CD8-positive, alpha-beta T cell (primary cell): ENCODE measurements at regions of chrX and their contacts with region 1.

Region 1: GRCh38 chrX:154490414-154491083 is at the start of gene SLC10A3:
- DNase-seq: peak; percentile 77 to 94 (median 85)
- ATAC-seq: peak; percentile 79
- H3K4me3 ChIP-seq: peak within 1 kb of the TSS; percentile 60 to 71
- H3K4me3 Mint-ChIP-seq: peak within 1 kb of the TSS; percentile 85
- H3K27ac ChIP-seq: peak within 1 kb of the TSS; percentile 84 to 94
- H3K27ac Mint-ChIP-seq: peak within 1 kb of the TSS; percentile 94
- H3K4me1 ChIP-seq: peaks cover 19% of the 10 kb centered on the region
- H3K4me1 Mint-ChIP-seq: peaks cover 24% of the 10 kb centered on the region
- H3K27me3 ChIP-seq: no peaks in the 10 kb centered on the region
- H3K27me3 Mint-ChIP-seq: no peaks in the 10 kb centered on the region
- CTCF ChIP-seq: no peak
- total RNA-seq, gene SLC10A3: 22.3 to 23.0 TPM

Region 2: GRCh38 chrX:153714256-153714655 is 776.3 kb before region 1 on chrX:
- CTCF ChIA-PET with region 1: no interaction called
- POLR2A ChIA-PET with region 1: no interaction called
- intact Hi-C with region 1: no loop called
- DNase-seq: no peak
- ATAC-seq: no peak
- H3K4me3 ChIP-seq: no peak overlapping the region
- H3K4me3 Mint-ChIP-seq: no peak overlapping the region
- H3K27ac ChIP-seq: no peak overlapping the region
- H3K27ac Mint-ChIP-seq: no peak overlapping the region
- H3K4me1 ChIP-seq: no peaks in the 10 kb centered on the region
- H3K4me1 Mint-ChIP-seq: peaks cover 11% of the 10 kb centered on the region
- H3K27me3 ChIP-seq: no peaks in the 10 kb centered on the region
- H3K27me3 Mint-ChIP-seq: no peaks in the 10 kb centered on the region
- CTCF ChIP-seq: no peak

Region 3: GRCh38 chrX:154019633-154020528 is 470.7 kb before region 1 on chrX and contains the start of gene IRAK1:
- CTCF ChIA-PET with region 1: no interaction called
- POLR2A ChIA-PET with region 1: no interaction called
- intact Hi-C with region 1: no loop called
- DNase-seq: peak in 8 of 9 experiments; percentile 29 to 78 (median 54)
- ATAC-seq: peak; percentile 68
- H3K4me3 ChIP-seq: peak within 1 kb of the TSS; percentile 54
- H3K4me3 Mint-ChIP-seq: peak within 1 kb of the TSS; percentile 83
- H3K27ac ChIP-seq: peak within 1 kb of the TSS; percentile 56 to 76
- H3K27ac Mint-ChIP-seq: peak within 1 kb of the TSS; percentile 91
- H3K4me1 ChIP-seq: peaks cover 22% of the 10 kb centered on the region
- H3K4me1 Mint-ChIP-seq: peaks cover 24% of the 10 kb centered on the region
- H3K27me3 ChIP-seq: no peaks in the 10 kb centered on the region
- H3K27me3 Mint-ChIP-seq: no peaks in the 10 kb centered on the region
- CTCF ChIP-seq: no peak
- total RNA-seq, gene IRAK1: 84.8 to 92.5 TPM

Region 4: DNA sequence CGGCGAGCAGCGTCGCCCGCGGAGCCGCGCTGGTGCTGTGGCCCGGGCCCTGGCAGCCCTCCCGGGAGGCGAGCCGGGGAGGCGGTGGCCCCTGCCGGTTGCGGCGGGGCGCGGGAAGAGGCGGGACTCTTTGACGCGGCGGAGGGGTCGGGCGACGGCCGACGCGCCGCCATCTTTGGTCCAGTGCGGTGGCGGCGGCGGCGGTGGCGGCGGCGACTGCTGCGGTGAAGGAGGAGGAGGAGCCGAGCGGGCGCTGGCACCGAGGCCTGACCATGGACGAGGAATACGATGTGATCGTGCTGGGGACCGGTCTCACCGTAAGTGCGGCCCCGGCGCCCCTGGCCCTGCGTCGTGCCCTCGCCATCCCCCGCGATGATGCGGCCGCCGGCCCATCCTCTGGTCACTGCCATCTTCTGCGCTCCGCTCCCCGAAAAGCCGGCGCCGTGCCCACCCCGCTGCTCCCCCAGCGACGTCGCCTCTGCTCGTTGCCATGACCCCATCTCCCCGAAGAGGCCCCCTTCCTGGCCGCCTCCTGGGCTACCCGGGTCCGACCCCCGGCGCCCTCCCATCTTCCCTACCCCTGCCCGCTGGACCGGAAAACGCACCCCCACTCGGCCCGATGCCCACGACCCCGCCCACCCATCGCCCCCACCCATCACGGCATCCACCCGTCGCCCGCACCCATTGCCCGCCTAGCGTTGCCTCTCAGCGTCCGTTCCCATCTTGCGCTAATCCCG is 53.4 kb before region 1 on chrX and contains the start of gene GDI1:
- CTCF ChIA-PET with region 1: no interaction called
- POLR2A ChIA-PET with region 1: interaction called, 6 read pairs
- intact Hi-C with region 1: loop called (anchors 2 kb)
- DNase-seq: peak in 7 of 9 experiments; percentile 24 to 73 (median 55)
- ATAC-seq: peak; percentile 56
- H3K4me3 ChIP-seq: peak within 1 kb of the TSS; percentile 41 to 58
- H3K4me3 Mint-ChIP-seq: peak within 1 kb of the TSS; percentile 79
- H3K27ac ChIP-seq: peak within 1 kb of the TSS; percentile 30 to 68
- H3K27ac Mint-ChIP-seq: peak within 1 kb of the TSS; percentile 92
- H3K4me1 ChIP-seq: peaks cover 10% of the 10 kb centered on the region
- H3K4me1 Mint-ChIP-seq: peaks cover 28% of the 10 kb centered on the region
- H3K27me3 ChIP-seq: no peaks in the 10 kb centered on the region
- H3K27me3 Mint-ChIP-seq: no peaks in the 10 kb centered on the region
- CTCF ChIP-seq: no peak
- total RNA-seq, gene GDI1: 113 to 119 TPM

Region 5: DNA sequence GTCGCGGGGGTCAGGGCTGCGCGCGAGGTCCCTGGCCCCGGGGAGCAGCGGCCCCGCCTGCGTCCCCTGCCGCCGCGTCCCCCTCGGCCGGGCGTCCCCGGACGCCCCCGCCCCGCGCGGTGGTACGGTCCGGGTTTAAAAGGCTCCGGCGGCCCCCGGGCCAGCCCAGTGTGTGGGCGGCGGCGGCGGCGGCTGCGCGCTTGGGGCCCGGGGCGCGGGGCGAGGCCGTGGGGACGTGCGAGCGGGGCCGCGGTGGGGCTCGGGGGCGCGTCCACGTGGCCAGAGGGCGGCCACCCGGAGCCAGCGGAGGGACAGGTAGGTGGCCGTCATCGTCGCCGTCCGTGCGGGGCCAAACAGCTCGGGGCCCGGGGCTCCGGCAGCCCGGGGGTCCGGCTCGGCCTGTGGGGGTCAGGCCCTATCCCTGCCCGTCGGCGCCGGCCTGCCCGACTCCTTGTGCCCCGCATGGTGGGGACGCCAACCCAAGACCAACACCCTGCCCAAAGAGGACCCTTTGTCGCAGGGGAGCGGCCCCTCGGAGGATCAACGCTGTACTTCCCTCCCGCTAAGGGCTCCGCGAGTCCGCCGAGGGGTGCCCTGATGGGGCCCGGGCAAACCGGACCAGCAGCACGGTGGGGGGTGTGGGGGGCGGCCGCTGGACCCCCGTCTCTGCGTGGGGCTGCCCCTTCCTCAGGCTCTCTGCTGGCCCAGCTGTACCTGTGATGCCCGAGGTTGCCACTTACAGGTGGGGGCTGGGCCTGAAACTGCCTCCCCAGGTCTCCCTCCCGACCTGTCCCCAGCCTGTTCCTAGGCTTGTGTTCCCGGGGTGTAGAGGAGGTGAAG is 32.2 kb before region 1 on chrX and contains the start of gene PLXNA3:
- CTCF ChIA-PET with region 1: no interaction called
- POLR2A ChIA-PET with region 1: interaction called, 9 read pairs
- intact Hi-C with region 1: loop called (anchors 1 to 2 kb)
- DNase-seq: peak; percentile 44 to 86 (median 64)
- ATAC-seq: peak; percentile 77
- H3K4me3 ChIP-seq: peak within 1 kb of the TSS; percentile 43 to 63
- H3K4me3 Mint-ChIP-seq: peak within 1 kb of the TSS; percentile 96
- H3K27ac ChIP-seq: peak within 1 kb of the TSS in 1 of 2 experiments; percentile 33
- H3K27ac Mint-ChIP-seq: peak within 1 kb of the TSS; percentile 94
- H3K4me1 ChIP-seq: peaks cover 5% of the 10 kb centered on the region
- H3K4me1 Mint-ChIP-seq: peaks cover 9% of the 10 kb centered on the region
- H3K27me3 ChIP-seq: no peaks in the 10 kb centered on the region
- H3K27me3 Mint-ChIP-seq: no peaks in the 10 kb centered on the region
- CTCF ChIP-seq: no peak
- total RNA-seq, gene PLXNA3: 46.7 to 52.1 TPM

Region 6: DNA sequence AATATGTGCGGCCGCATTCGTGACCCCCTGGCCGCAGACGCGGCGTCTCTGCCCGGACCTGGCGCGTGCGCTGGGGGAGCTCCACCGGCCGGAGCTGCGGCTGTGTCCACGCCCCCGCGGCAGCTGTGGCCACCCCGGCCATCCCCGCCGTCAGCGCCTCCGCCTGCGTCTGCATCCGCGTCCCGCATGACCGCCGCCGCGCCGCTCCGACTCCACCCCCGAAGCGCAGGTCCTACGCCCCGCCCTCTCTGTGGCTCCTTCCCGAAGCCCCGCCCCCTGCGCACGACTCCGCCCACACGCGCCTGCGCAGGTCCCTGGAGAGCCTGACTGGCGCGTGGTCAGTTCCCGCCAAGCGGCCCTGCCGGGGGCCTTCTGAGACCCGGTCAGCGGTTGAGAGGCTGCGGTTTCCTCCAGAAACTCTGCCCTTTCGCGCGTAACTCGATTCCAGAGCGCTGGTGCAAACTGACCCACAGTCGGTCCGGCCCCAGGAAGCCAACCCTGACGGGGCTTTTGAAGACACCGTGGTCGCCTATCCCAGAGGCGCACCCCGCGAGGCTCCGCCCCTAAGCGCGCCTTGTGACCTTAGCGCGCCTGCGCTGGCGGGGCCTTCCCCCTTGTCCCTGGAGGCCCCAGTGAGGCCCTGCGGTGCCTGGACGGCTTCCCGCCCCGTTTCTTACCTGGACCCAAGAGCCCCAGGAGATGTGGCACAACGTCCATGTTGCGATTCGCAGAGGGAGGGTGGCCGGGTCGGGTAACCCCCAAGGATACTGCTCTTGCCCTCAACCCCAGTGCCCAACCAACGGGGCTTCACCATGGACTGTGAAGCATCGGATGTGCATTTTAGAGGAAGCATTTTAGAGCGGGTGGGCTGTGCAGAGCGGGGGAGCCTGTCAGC is 11.6 kb before region 1 on chrX and contains the start of gene LAGE3:
- CTCF ChIA-PET with region 1: no interaction called
- POLR2A ChIA-PET with region 1: interaction called, 9 read pairs
- intact Hi-C with region 1: loop called in 1 of 2 experiments (anchors 1 kb)
- DNase-seq: peak; percentile 86 to 98 (median 93)
- ATAC-seq: peak; percentile 93
- H3K4me3 ChIP-seq: peak within 1 kb of the TSS; percentile 54 to 72
- H3K4me3 Mint-ChIP-seq: peak within 1 kb of the TSS; percentile 82
- H3K27ac ChIP-seq: peak within 1 kb of the TSS; percentile 66 to 82
- H3K27ac Mint-ChIP-seq: peak within 1 kb of the TSS; percentile 84
- H3K4me1 ChIP-seq: peaks cover 28% of the 10 kb centered on the region
- H3K4me1 Mint-ChIP-seq: peaks cover 25% of the 10 kb centered on the region
- H3K27me3 ChIP-seq: no peaks in the 10 kb centered on the region
- H3K27me3 Mint-ChIP-seq: no peaks in the 10 kb centered on the region
- CTCF ChIP-seq: no peak
- total RNA-seq, gene LAGE3: 6.3 to 6.6 TPM

Region 7: GRCh38 chrX:154515878-154516655 is 25.5 kb after region 1 on chrX and contains the start of gene FAM3A:
- CTCF ChIA-PET with region 1: interaction called, 3 read pairs
- POLR2A ChIA-PET with region 1: interaction called, 13 read pairs
- intact Hi-C with region 1: loop called (anchors 1 kb)
- DNase-seq: peak; percentile 83 to 96 (median 91)
- ATAC-seq: peak; percentile 94
- H3K4me3 ChIP-seq: peak within 1 kb of the TSS; percentile 64 to 68
- H3K4me3 Mint-ChIP-seq: peak within 1 kb of the TSS; percentile 81
- H3K27ac ChIP-seq: peak within 1 kb of the TSS; percentile 70 to 76
- H3K27ac Mint-ChIP-seq: peak within 1 kb of the TSS; percentile 92
- H3K4me1 ChIP-seq: peaks cover 39% of the 10 kb centered on the region
- H3K4me1 Mint-ChIP-seq: peaks cover 27% of the 10 kb centered on the region
- H3K27me3 ChIP-seq: no peaks in the 10 kb centered on the region
- H3K27me3 Mint-ChIP-seq: no peaks in the 10 kb centered on the region
- CTCF ChIP-seq: no peak
- total RNA-seq, gene FAM3A: 37.7 to 41.7 TPM

Region 8: DNA sequence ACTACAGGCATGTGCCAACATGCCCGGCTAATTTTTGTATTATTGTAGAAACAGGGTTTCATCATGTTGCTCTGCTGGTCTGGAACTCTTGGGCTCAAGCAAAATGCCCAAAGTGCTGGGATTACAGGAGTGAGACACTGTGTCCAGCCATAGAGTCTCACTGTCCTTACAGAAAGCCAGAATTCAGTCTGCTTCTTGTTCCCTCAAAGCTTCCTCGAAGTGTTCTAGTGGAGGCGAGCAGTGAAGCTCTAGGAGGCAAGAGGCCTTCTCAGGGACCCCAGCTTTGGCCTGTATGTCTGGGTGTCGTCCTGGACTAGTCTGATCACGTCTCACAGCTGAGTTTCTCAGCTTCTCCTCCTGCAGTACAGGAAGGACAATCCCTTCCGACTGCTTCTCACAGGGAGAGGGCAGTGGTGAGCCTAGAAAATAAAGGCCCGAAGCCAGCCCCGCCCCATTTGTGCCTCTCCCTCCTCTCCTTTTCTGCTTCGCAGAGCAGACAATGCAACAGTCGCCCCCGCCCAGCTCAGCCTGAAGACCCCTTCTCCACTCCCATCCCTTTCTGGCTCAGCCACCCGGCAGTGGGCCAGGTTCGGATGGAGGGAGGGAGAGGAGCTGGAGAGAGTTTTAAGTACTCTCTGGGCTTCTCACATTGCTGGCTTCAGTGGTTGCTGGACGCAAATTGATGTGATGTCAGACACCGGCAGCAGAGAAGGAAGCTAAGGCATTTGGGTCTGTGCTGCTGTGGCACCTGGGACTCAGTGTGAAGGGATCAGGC is 36.5 kb after region 1 on chrX:
- CTCF ChIA-PET with region 1: interaction called, 3 read pairs
- POLR2A ChIA-PET with region 1: interaction called, 10 read pairs
- intact Hi-C with region 1: loop called in 1 of 2 experiments (anchors 5 kb)
- DNase-seq: peak in 7 of 9 experiments; percentile 39 to 73 (median 59)
- ATAC-seq: peak; percentile 86
- H3K4me3 ChIP-seq: no peak overlapping the region
- H3K4me3 Mint-ChIP-seq: peak overlapping the region; percentile 3
- H3K27ac ChIP-seq: no peak overlapping the region
- H3K27ac Mint-ChIP-seq: peak overlapping the region; percentile 37
- H3K4me1 ChIP-seq: peaks cover 25% of the 10 kb centered on the region
- H3K4me1 Mint-ChIP-seq: peaks cover 23% of the 10 kb centered on the region
- H3K27me3 ChIP-seq: no peaks in the 10 kb centered on the region
- H3K27me3 Mint-ChIP-seq: no peaks in the 10 kb centered on the region
- CTCF ChIP-seq: no peak

Region 9: DNA sequence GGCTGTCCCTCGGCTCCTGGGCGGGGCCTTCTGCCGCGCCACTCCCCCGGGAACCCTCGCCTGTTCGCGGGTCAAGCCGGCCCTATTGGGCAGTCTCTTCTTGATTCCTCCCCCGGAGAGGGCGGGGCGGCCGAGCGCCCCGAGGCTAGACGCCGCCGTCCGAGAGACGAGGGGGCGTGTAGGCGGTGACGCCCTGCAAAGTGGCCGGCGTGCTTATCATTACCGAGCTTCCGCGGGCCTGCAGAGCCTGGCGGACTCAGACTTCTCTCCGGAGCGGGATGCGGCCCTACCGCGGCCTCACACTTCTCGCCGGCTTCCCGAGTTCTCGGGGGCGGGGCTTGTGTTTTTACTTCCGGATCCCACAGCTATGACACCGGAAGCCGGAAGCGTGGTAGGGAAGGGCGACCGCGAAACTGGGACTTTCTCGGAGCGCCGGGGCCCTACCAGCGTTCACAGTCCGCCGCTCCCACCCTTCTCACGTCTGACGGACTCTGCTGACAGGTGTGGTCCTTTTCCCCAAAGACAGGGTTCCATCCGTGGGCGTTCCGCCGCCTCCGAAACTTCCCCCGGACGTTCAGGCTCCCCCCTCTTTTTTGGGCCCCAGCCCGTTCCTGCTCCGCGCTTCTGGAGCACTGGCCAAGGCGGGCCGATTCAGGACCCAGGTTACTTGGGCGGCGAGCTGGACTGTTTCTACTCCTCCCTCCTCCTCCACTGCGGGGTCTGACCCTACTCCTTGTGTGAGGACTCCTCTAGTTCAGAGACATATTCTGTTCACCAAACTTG is 56.9 kb after region 1 on chrX and contains the start of gene IKBKG:
- CTCF ChIA-PET with region 1: no interaction called
- POLR2A ChIA-PET with region 1: interaction called, 3 read pairs
- intact Hi-C with region 1: loop called in 1 of 2 experiments (anchors 2 kb)
- DNase-seq: peak; percentile 76 to 93 (median 86)
- ATAC-seq: peak; percentile 77
- H3K4me3 ChIP-seq: peak within 1 kb of the TSS; percentile 78 to 89
- H3K4me3 Mint-ChIP-seq: peak within 1 kb of the TSS; percentile 93
- H3K27ac ChIP-seq: peak within 1 kb of the TSS; percentile 81 to 95
- H3K27ac Mint-ChIP-seq: peak within 1 kb of the TSS; percentile 93
- H3K4me1 ChIP-seq: peaks cover 49% of the 10 kb centered on the region
- H3K4me1 Mint-ChIP-seq: peaks cover 49% of the 10 kb centered on the region
- H3K27me3 ChIP-seq: no peaks in the 10 kb centered on the region
- H3K27me3 Mint-ChIP-seq: no peaks in the 10 kb centered on the region
- CTCF ChIP-seq: no peak
- total RNA-seq, gene IKBKG: 34.7 to 37.4 TPM